Stomach (tissue), 19 donors: ENCODE measurements at regions of chr15 and their contacts with region 1.

Region 1: DNA sequence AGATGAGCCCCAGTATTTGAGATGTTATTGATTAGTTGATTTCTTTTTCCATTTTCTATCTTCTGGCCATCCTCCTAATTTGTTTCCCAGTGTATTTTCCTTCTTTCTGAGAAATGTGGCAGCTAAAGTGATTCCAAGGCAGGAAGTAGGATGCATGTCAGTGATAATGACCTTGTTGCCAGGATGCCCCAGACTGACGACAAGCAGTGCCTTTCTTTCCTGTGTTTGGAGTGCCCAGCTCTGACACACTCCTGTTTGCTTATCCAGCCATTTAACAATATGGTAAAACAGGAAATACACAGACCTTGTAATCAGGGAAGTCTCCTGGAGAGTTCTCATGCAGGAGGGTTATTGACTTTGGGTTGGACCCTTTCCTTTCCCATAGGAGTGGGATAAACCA is 20.4 kb downstream of the TMOD2 start:
- DNase-seq: peak in 1 of 2 donors; percentile 20
- H3K4me3 ChIP-seq: no peak overlapping the region
- H3K27ac ChIP-seq: no peak overlapping the region
- H3K4me1 ChIP-seq: peaks cover 0 to 16% (median 5%) of the 10 kb centered on the region in 4 donors
- H3K27me3 ChIP-seq: no peaks in the 10 kb centered on the region
- CTCF ChIP-seq: no peak
- EP300 ChIP-seq: no peak
- POLR2A ChIP-seq: no peak

Region 2: GRCh38 chr15:51649659-51650521 is 121.9 kb before region 1 on chr15:
- intact Hi-C with region 1: loop called (anchors 5 kb)
- DNase-seq: peak in 1 of 2 donors; percentile 92
- H3K4me3 ChIP-seq: no peak overlapping the region
- H3K27ac ChIP-seq: no peak overlapping the region
- H3K4me1 ChIP-seq: peaks cover 0 to 9% (median 0%) of the 10 kb centered on the region in 4 donors
- H3K27me3 ChIP-seq: no peaks in the 10 kb centered on the region
- CTCF ChIP-seq: peak in 5 of 7 experiments; percentile 48 to 84 (median 72)
- EP300 ChIP-seq: no peak
- POLR2A ChIP-seq: no peak